Psoas muscle (tissue), 8 donors: ENCODE measurements at regions of chr1 and their contacts with region 1.

Region 1: DNA sequence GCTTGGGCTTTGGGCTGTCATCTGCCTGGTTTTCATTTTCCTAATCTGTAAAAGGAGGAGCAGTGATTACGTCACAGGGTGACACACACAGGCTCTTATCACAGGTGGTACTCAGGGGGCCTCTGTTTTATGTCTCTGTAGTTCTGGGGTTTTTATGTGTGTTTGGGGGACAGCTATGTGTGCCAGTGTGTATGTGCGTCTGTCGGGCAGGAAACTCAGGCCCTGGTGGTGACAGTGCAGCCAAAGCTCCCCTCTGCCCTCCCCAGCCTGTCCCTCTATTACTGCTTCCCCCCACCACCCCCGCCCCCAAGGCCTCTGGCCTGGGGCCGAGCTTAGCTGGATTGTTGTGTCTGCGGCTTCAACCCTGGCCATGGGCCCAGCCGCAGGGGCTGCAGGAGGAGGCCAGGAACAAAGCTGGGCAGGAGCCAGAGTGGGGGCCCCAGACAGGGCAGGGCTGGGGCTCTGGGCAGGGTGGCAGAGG is 13.3 kb downstream of the MFAP2 start:
- DNase-seq: no peak
- ATAC-seq: no peak
- H3K4me3 ChIP-seq: no peak overlapping the region
- H3K27ac ChIP-seq: no peak overlapping the region
- H3K4me1 ChIP-seq: no peaks in the 10 kb centered on the region
- H3K27me3 ChIP-seq: no peaks in the 10 kb centered on the region
- CTCF ChIP-seq: no peak

Region 2: DNA sequence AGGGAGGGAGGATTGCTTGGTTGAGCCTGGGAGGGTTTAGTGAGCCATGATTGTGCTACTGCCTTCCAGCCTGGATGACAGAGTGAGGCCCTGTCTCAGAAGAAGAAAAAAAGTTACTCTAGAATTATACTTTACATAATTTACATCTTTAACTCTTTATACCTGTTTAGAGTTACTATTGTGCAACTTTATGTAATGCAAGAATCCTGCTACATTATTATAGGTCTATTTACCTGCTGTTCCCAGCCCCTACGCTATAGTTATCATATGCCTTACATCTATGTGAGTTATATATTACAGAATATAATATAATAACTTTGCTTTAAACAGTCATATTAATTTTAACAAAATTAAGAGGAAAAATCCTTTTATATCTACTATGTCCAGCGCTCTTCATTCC is 72.4 kb after region 1 on chr1:
- intact Hi-C with region 1: loop called in 1 of 2 experiments (anchors 5 kb)
- DNase-seq: no peak
- ATAC-seq: no peak
- H3K4me3 ChIP-seq: no peak overlapping the region
- H3K27ac ChIP-seq: no peak overlapping the region
- H3K4me1 ChIP-seq: no peaks in the 10 kb centered on the region
- H3K27me3 ChIP-seq: no peaks in the 10 kb centered on the region
- CTCF ChIP-seq: no peak

Region 3: DNA sequence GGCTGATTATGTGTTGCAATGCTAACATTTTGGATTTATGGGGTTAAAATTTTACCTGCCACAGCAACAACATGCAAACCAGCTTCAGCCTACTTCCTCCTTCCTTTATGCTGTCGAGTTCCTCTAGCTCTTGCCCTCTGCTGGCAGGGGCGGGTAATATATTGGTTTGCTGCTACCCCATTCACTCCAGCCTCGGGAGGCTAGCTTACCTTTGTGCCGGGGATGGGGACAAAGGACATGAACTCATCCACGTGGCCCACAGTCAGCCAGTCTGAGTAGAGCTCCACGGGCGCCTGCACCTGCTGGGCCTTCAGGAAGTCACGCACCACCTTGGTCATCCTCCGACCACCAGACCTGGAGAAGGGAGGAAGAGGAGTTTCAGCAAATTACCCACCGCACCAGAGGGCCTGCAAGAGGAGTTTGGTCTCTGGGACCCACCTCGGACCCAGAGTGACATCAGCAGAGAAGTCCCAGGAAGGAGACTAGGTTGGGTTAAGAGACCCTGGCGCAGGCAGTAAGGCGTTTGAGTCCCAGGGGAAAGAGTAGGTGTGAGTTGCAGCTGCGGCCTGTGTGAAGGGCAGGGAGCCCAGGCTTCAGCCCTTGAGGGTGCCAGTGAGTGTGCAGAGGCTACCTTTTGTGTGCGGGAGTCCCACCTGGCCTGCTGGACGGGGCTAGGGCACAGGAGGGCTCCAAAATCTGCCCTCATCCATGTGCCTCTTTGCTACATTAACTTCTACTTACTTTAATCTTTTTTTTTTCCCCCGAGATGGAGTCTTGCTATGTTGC is 108.5 kb after region 1 on chr1:
- intact Hi-C with region 1: no loop called
- DNase-seq: no peak
- ATAC-seq: peak; percentile 31 to 62 (median 52)
- H3K4me3 ChIP-seq: no peak overlapping the region
- H3K27ac ChIP-seq: peak overlapping the region; percentile 23
- H3K4me1 ChIP-seq: no peaks in the 10 kb centered on the region
- H3K27me3 ChIP-seq: no peaks in the 10 kb centered on the region
- CTCF ChIP-seq: peak; percentile 17

Region 4: DNA sequence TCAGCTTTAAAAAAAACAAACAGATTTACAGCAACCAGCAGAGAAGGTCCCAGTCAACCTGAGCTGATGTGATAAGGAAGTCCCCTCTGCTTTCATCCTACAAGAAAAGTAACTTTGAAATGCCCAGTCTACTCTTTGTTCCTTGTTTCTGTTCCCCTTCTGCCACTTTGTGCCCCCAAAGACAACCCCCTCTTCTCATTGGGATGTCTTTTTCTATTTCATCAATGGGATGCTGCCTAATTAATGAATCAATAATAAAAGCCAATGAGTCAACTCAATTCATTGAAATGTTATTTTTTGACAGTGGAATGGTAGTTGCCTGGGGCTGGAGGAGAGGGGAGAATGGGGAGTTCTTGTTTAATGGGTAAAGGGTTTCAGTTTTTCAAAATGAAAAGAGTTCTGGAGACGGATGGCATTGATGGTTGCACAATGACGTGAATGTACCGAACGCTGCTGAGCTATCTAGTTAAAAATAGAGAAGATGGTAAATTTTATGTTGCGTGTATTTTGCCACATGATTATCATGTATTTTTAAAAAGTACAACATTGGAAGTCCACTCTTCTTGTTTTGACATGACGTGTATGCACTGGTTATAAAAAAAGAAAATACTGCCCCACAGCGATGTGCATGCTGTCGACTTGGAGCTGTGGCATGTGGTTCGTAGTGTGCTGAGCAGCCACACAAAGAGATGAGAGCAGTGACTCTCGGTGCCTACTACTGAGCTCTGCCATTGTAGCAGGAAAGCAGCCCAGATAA is 174.5 kb after region 1 on chr1:
- intact Hi-C with region 1: no loop called
- DNase-seq: no peak
- ATAC-seq: no peak
- H3K4me3 ChIP-seq: no peak overlapping the region
- H3K27ac ChIP-seq: no peak overlapping the region
- H3K4me1 ChIP-seq: no peaks in the 10 kb centered on the region
- H3K27me3 ChIP-seq: peaks cover 0 to 25% (median 2%) of the 10 kb centered on the region in 3 donors
- CTCF ChIP-seq: no peak

Region 5: DNA sequence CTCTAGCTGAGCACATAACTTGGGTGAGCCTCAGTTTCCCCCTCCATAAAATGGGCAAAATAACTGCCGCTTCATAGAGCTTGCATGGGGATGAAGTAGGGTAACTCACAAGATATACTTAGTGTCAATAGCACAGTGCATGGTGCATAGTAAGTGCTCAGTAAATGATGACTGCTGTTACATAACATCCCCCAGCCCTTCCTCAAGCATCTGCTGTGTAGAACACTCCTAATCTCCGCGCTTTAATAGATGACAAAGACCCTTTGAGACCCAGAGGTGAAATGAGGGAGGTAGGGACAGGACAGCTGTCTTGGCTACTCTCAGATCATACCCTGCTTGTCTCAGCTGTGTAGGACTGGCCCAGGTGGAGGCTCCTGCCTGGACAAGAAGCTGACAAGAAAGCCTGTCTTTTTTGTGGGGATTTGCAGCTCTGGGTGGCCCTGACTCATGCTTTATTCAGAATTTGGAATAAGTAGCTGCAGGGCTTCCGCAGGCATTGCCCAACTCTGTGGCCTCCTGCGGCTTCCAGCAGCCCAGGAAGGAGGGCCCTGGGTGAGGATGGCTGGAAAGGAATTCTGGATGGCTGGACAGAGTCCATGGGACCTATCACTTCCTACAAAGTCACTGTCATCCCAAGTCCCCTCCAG is 320.1 kb after region 1 on chr1:
- intact Hi-C with region 1: no loop called
- DNase-seq: no peak
- ATAC-seq: no peak
- H3K4me3 ChIP-seq: no peak overlapping the region
- H3K27ac ChIP-seq: no peak overlapping the region
- H3K4me1 ChIP-seq: no peaks in the 10 kb centered on the region
- H3K27me3 ChIP-seq: peaks cover 0 to 49% (median 1%) of the 10 kb centered on the region in 3 donors
- CTCF ChIP-seq: no peak